Kidney (tissue), 22 donors: ENCODE measurements at regions of chr18 and their contacts with region 1.

Region 1: DNA sequence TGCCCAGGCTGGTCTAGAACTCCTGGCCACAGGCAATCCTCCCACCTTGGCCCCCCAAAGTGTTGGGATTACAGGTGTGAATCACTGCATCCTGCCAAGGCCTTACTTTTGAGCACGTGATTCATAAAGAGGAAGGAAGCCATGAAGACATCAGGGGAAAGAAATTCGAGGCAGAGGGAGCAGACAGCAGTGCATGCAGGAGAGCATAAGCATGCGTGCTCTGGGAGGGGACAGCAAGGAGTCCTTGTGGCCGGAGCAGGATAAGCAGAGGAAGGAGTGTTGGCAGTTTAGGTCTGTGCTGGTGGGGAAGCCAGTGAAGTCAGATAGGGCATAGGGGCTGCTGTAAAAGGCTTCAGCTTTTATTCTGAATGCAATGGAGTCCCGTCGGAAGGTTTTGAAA is 400.5 kb upstream of the RAB12 start:
- DNase-seq: no peak
- H3K4me3 ChIP-seq: no peak overlapping the region
- H3K27ac ChIP-seq: no peak overlapping the region
- H3K4me1 ChIP-seq: no peaks in the 10 kb centered on the region
- H3K27me3 ChIP-seq: no peaks in the 10 kb centered on the region
- CTCF ChIP-seq: no peak

Region 2: DNA sequence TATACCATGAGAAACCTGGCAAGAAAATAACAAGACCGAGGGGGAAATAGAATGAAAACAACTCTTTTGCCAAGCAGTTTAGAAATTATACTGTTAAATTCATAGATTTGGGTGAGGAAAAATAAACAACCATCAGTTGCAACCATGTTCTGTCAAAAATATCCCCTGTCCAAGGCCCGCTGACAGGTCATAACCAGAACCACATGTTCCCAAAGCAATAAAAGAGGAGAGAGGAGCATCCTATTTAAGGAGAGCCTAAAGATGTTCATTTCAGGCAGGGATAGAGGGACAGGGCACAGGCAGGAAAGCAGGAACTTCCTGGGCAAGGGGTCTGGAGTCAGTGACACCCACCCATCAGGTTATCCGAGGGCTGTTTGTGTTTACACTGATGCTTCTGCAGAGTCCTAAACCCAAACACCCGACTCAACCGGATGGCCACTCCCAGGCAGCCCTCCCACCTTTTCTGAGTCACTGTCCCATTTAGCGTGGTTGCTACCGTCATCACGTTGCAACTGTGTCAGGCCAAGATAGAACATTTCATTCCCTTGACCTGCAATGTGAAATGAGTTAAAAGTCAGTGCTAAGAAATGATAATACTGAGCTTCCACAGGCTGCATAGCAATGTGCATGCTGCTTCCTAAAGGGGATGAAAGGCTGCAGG is 67.7 kb before region 1 on chr18:
- intact Hi-C with region 1: loop called (anchors 10 kb)
- DNase-seq: no peak
- H3K4me3 ChIP-seq: no peak overlapping the region
- H3K27ac ChIP-seq: no peak overlapping the region
- H3K4me1 ChIP-seq: no peaks in the 10 kb centered on the region
- H3K27me3 ChIP-seq: no peaks in the 10 kb centered on the region
- CTCF ChIP-seq: no peak